H1 (cell line): ENCODE measurements at regions of chr4 and their contacts with region 1.

Region 1: GRCh38 chr4:189202182-189202868 is 738.3 kb upstream of the FRG1 start:
- DNase-seq: peak in 1 of 2 experiments; percentile 72
- H3K4me3 ChIP-seq: no peak overlapping the region
- H3K27ac ChIP-seq: no peak overlapping the region
- H3K4me1 ChIP-seq: peaks cover 0 to 2% (median 0%) of the 10 kb centered on the region in 4 experiments; a peak in 2 of 7 replicates
- H3K27me3 ChIP-seq: no peaks in the 10 kb centered on the region
- CTCF ChIP-seq: peak; percentile 74 to 90 (median 86)
- EP300 ChIP-seq: no peak
- POLR2A ChIP-seq: no peak
- RAD21 ChIP-seq: peak; percentile 98 to 99

Region 2: GRCh38 chr4:189090174-189090814 is 112.0 kb before region 1 on chr4:
- CTCF ChIA-PET with region 1: interaction called, 32 read pairs
- POLR2A ChIA-PET with region 1: no interaction called
- DNase-seq: no peak
- H3K4me3 ChIP-seq: no peak overlapping the region
- H3K27ac ChIP-seq: no peak overlapping the region
- H3K4me1 ChIP-seq: peaks cover 0 to 2% (median 0%) of the 10 kb centered on the region in 4 experiments; a peak in 1 of 7 replicates
- H3K27me3 ChIP-seq: no peaks in the 10 kb centered on the region
- CTCF ChIP-seq: peak; percentile 64 to 85 (median 74)
- EP300 ChIP-seq: no peak
- POLR2A ChIP-seq: no peak
- RAD21 ChIP-seq: peak; percentile 62 to 74

Region 3: DNA sequence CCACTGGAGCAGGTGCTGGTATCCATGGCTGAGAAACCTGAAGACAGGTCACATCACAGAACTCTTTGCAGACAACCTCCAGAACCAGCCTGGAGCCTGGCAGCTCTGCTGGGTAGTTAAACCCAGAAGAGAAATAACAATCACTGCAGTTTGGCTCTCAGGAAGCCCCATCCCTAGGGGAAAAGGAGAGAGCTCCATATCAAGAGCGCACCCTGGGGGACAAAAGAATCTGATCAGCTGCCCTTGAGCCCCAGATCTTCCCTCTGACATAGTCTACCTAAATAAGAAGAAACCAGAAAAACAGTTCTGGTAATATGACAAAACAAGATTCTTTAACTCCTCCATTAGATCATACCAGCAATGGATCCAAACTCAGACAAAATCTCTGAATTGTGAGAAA is 84.9 kb before region 1 on chr4:
- CTCF ChIA-PET with region 1: interaction called, 16 read pairs
- POLR2A ChIA-PET with region 1: no interaction called
- DNase-seq: no peak
- H3K4me3 ChIP-seq: no peak overlapping the region
- H3K27ac ChIP-seq: no peak overlapping the region
- H3K4me1 ChIP-seq: no peaks in the 10 kb centered on the region
- H3K27me3 ChIP-seq: no peaks in the 10 kb centered on the region
- CTCF ChIP-seq: peak; percentile 0 to 29 (median 3); a peak in 3 of 4 replicates
- EP300 ChIP-seq: no peak
- POLR2A ChIP-seq: no peak
- RAD21 ChIP-seq: peak; percentile 50 to 58

Region 4: GRCh38 chr4:189147005-189147929 is 55.1 kb before region 1 on chr4:
- CTCF ChIA-PET with region 1: interaction called, 16 read pairs
- POLR2A ChIA-PET with region 1: no interaction called
- DNase-seq: no peak
- H3K4me3 ChIP-seq: no peak overlapping the region
- H3K27ac ChIP-seq: no peak overlapping the region
- H3K4me1 ChIP-seq: no peaks in the 10 kb centered on the region
- H3K27me3 ChIP-seq: no peaks in the 10 kb centered on the region
- CTCF ChIP-seq: no peak
- EP300 ChIP-seq: no peak
- POLR2A ChIP-seq: no peak
- RAD21 ChIP-seq: no peak

Region 5: DNA sequence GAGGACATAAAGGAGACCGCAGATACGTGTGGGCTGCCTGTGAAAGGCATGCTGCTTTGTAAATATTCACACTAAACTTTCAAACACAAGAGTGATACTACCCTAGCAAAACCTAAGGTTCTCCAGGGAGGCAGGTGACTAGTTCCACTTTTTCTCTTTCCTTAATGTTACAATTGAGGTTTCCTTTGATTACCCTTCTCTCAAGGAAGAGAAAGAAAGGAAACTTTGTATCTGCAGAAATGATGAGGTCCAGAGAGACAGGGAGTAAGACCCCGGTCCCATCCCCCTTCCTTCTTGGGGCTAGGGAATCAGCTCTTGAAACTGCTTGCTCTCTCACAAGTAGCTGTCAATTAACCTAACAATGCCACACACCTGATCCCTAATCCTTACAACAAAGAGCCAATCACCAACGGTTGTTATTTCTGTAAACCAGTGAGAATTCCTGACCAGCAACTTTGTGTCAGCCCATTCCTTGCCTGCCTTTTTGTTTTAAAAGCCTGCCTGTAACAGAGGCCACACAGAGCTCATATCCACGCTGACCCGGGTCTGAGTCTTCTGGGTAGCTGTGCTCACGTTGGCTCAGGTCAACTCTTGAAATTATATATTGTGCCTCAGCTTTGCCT is 16.4 kb before region 1 on chr4:
- CTCF ChIA-PET with region 1: interaction called, 16 read pairs
- POLR2A ChIA-PET with region 1: no interaction called
- DNase-seq: peak in 1 of 2 experiments; percentile 76
- H3K4me3 ChIP-seq: peak overlapping the region in 2 of 4 experiments; percentile 5 to 37; a peak in 2 of 8 replicates
- H3K27ac ChIP-seq: peak overlapping the region; percentile 72
- H3K4me1 ChIP-seq: peaks cover 5 to 16% (median 14%) of the 10 kb centered on the region in 4 experiments; a peak in 5 of 7 replicates
- H3K27me3 ChIP-seq: no peaks in the 10 kb centered on the region
- CTCF ChIP-seq: no peak
- EP300 ChIP-seq: peak in 1 of 2 experiments; percentile 95; a peak in 1 of 3 replicates
- POLR2A ChIP-seq: peak; percentile 70 to 90
- RAD21 ChIP-seq: 0 out of 4 replicates have a peak, but pooled peaks of 1 of the 2 experiments have one; percentile 9

Region 6: GRCh38 chr4:189228720-189229119 is 26.4 kb after region 1 on chr4:
- CTCF ChIA-PET with region 1: no interaction called
- POLR2A ChIA-PET with region 1: no interaction called
- DNase-seq: no peak
- H3K4me3 ChIP-seq: no peak overlapping the region
- H3K27ac ChIP-seq: no peak overlapping the region
- H3K4me1 ChIP-seq: no peaks in the 10 kb centered on the region
- H3K27me3 ChIP-seq: no peaks in the 10 kb centered on the region
- CTCF ChIP-seq: no peak
- EP300 ChIP-seq: no peak
- POLR2A ChIP-seq: no peak
- RAD21 ChIP-seq: no peak

Region 7: GRCh38 chr4:189255636-189256035 is 53.3 kb after region 1 on chr4:
- CTCF ChIA-PET with region 1: no interaction called
- POLR2A ChIA-PET with region 1: no interaction called
- DNase-seq: no peak
- H3K4me3 ChIP-seq: no peak overlapping the region
- H3K27ac ChIP-seq: no peak overlapping the region
- H3K4me1 ChIP-seq: no peaks in the 10 kb centered on the region; a peak in 1 of 7 replicates
- H3K27me3 ChIP-seq: no peaks in the 10 kb centered on the region
- CTCF ChIP-seq: no peak
- EP300 ChIP-seq: no peak
- POLR2A ChIP-seq: no peak
- RAD21 ChIP-seq: no peak

Region 8: DNA sequence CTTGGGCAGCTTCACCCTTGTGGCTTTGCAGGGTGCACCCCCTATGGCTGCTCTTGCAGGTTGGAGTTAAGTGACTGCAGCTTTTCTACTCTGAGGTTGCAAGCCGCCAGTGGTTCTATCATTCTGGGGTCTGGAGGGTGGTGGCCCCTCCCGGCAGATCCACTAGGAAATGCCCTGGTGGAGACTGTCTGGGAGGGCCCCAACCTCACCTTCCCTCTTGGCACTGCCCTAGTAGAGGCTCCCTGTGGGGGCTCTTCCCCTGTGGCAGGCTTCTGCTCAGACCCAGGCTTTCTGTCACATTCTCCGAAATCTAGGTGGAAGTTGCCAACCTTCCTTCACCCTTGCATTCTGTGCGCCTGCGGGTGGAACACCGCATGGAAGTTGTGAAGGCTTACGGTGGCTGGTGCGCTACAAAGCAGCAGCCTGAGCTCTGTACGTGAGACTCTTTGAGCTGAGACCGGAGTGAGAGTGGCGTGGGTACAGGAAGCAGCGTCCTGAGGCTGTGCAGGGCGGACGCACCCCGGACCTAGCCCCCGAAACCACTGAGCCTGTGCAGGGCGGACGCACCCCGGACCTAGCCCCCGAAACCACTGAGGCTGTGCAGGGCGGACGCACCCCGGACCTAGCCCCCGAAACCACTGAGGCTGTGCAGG is 111.7 kb after region 1 on chr4:
- CTCF ChIA-PET with region 1: no interaction called
- POLR2A ChIA-PET with region 1: no interaction called
- DNase-seq: no peak
- H3K4me3 ChIP-seq: no peak overlapping the region
- H3K27ac ChIP-seq: no peak overlapping the region
- H3K4me1 ChIP-seq: no peaks in the 10 kb centered on the region
- H3K27me3 ChIP-seq: no peaks in the 10 kb centered on the region; a peak in 1 of 7 replicates
- CTCF ChIP-seq: no peak
- EP300 ChIP-seq: no peak
- POLR2A ChIP-seq: no peak
- RAD21 ChIP-seq: no peak